CD4-positive, alpha-beta memory T cell (primary cell): ENCODE measurements at regions of chr7 and their contacts with region 1.

Region 1: GRCh38 chr7:105652359-105652993 is 71.2 kb upstream of the EFCAB10 start:
- DNase-seq: peak; percentile 46 to 59 (median 52)
- H3K4me3 ChIP-seq: no peak overlapping the region
- H3K4me3 Mint-ChIP-seq: no peak overlapping the region
- H3K27ac ChIP-seq: no peak overlapping the region
- H3K27ac Mint-ChIP-seq: peak overlapping the region in 2 of 7 donors; percentile 1 to 24
- H3K4me1 ChIP-seq: peaks cover 7% of the 10 kb centered on the region
- H3K4me1 Mint-ChIP-seq: peaks cover 12 to 28% (median 16%) of the 10 kb centered on the region in 4 donors
- H3K27me3 ChIP-seq: no peaks in the 10 kb centered on the region
- H3K27me3 Mint-ChIP-seq: no peaks in the 10 kb centered on the region

Region 2: DNA sequence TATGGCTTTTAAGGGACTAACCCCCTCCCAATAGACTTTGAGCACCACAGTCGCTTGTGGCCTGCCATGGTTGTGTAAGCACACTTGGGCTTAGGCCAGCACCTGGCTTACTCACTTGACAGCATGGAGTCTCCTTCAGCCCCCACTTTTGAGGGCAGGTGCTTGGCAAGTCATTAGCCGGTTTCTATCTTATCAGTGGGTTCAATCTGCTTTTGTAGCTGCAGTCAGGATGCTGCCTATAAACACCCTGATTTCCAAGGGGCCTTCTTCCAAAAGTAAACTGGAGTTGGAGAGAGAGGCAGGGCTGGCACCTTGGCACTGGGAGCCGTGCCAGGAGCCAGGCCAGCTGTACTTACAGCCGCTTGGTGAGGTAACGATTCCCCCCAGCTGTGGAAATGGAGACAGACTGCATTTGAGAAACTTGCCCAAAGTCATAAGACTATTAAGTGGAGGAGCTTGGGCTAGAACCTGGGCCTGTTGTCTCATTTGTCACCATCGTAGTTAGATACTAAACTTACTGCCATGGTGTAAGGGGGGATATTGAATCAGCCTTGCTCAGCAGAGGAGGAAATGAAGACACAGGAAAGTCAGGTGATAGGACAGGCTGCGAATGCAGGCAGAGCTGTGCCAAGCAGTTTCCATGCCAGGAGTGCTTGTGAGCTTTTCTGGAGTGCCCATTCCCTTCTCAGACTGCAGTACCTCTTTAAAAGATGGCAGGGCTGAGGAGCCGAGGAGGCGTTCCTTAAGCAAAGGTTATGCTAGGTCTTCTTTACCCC is 21.1 kb after region 1 on chr7:
- CTCF ChIA-PET with region 1: interaction called, 82 read pairs
- POLR2A ChIA-PET with region 1: interaction called, 5 read pairs
- intact Hi-C with region 1: no loop called
- DNase-seq: peak in 1 of 5 donors; percentile 61
- H3K4me3 ChIP-seq: no peak overlapping the region
- H3K4me3 Mint-ChIP-seq: peak overlapping the region in 6 of 8 donors; percentile 3 to 78 (median 24)
- H3K27ac ChIP-seq: peak overlapping the region; percentile 36
- H3K27ac Mint-ChIP-seq: peak overlapping the region; percentile 58 to 97 (median 85)
- H3K4me1 ChIP-seq: peaks cover 63% of the 10 kb centered on the region
- H3K4me1 Mint-ChIP-seq: peaks cover 49 to 73% (median 62%) of the 10 kb centered on the region in 4 donors
- H3K27me3 ChIP-seq: no peaks in the 10 kb centered on the region
- H3K27me3 Mint-ChIP-seq: no peaks in the 10 kb centered on the region

Region 3: GRCh38 chr7:105691733-105692564 is 39.5 kb after region 1 on chr7:
- CTCF ChIA-PET with region 1: interaction called, 17 read pairs
- POLR2A ChIA-PET with region 1: interaction called, 9 read pairs
- intact Hi-C with region 1: loop called (anchors 1 kb)
- DNase-seq: peak; percentile 84 to 95 (median 91)
- H3K4me3 ChIP-seq: peak overlapping the region; percentile 71 to 75
- H3K4me3 Mint-ChIP-seq: peak overlapping the region; percentile 91 to 98 (median 94)
- H3K27ac ChIP-seq: peak overlapping the region; percentile 89
- H3K27ac Mint-ChIP-seq: peak overlapping the region; percentile 96 to 100 (median 98)
- H3K4me1 ChIP-seq: peaks cover 44% of the 10 kb centered on the region
- H3K4me1 Mint-ChIP-seq: peaks cover 29 to 78% (median 57%) of the 10 kb centered on the region in 4 donors
- H3K27me3 ChIP-seq: no peaks in the 10 kb centered on the region
- H3K27me3 Mint-ChIP-seq: no peaks in the 10 kb centered on the region

Region 4: DNA sequence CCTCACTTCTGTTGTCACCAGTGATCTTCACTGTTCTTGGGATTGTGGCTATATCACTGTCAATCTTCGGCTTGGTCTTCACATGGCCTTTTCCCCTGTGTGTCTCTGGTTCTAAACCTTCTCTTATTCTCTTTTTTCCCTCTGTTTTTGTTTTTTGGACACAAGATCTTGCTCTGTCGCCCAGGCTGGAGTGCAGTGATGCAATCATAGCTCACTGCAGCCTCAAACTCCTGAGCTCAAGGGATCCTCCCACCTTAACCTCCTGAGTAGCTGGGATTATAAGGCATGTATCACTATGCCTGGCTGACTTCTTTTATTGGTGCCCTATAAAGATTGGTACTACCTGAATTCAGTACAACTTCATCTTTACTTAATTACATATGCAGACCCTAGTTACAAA is 72.2 kb after region 1 on chr7:
- CTCF ChIA-PET with region 1: interaction called, 11 read pairs
- POLR2A ChIA-PET with region 1: no interaction called
- intact Hi-C with region 1: no loop called
- DNase-seq: no peak
- H3K4me3 ChIP-seq: no peak overlapping the region
- H3K4me3 Mint-ChIP-seq: no peak overlapping the region
- H3K27ac ChIP-seq: no peak overlapping the region
- H3K27ac Mint-ChIP-seq: peak overlapping the region in 2 of 7 donors; percentile 30 to 37
- H3K4me1 ChIP-seq: no peaks in the 10 kb centered on the region
- H3K4me1 Mint-ChIP-seq: no peaks in the 10 kb centered on the region
- H3K27me3 ChIP-seq: no peaks in the 10 kb centered on the region
- H3K27me3 Mint-ChIP-seq: no peaks in the 10 kb centered on the region

Region 5: GRCh38 chr7:105743351-105744090 is 91.0 kb after region 1 on chr7:
- CTCF ChIA-PET with region 1: interaction called, 14 read pairs
- POLR2A ChIA-PET with region 1: no interaction called
- intact Hi-C with region 1: no loop called
- DNase-seq: no peak
- H3K4me3 ChIP-seq: no peak overlapping the region
- H3K4me3 Mint-ChIP-seq: no peak overlapping the region
- H3K27ac ChIP-seq: no peak overlapping the region
- H3K27ac Mint-ChIP-seq: peak overlapping the region in 2 of 7 donors; percentile 18 to 58
- H3K4me1 ChIP-seq: peaks cover 4% of the 10 kb centered on the region
- H3K4me1 Mint-ChIP-seq: peaks cover 13 to 33% (median 18%) of the 10 kb centered on the region in 4 donors
- H3K27me3 ChIP-seq: no peaks in the 10 kb centered on the region
- H3K27me3 Mint-ChIP-seq: no peaks in the 10 kb centered on the region

Region 6: GRCh38 chr7:106009403-106010226 is 357.1 kb after region 1 on chr7:
- CTCF ChIA-PET with region 1: interaction called, 12 read pairs
- POLR2A ChIA-PET with region 1: no interaction called
- intact Hi-C with region 1: loop called (anchors 1 kb)
- DNase-seq: peak; percentile 77 to 83 (median 78)
- H3K4me3 ChIP-seq: no peak overlapping the region
- H3K4me3 Mint-ChIP-seq: peak overlapping the region in 4 of 8 donors; percentile 34 to 64 (median 48)
- H3K27ac ChIP-seq: no peak overlapping the region
- H3K27ac Mint-ChIP-seq: peak overlapping the region in 6 of 7 donors; percentile 64 to 85 (median 74)
- H3K4me1 ChIP-seq: peaks cover 23% of the 10 kb centered on the region
- H3K4me1 Mint-ChIP-seq: peaks cover 18 to 28% (median 24%) of the 10 kb centered on the region in 4 donors
- H3K27me3 ChIP-seq: no peaks in the 10 kb centered on the region
- H3K27me3 Mint-ChIP-seq: no peaks in the 10 kb centered on the region

Region 7: GRCh38 chr7:106041140-106041717 is 388.8 kb after region 1 on chr7:
- CTCF ChIA-PET with region 1: interaction called, 67 read pairs
- POLR2A ChIA-PET with region 1: interaction called, 3 read pairs
- intact Hi-C with region 1: loop called (anchors 1 kb)
- DNase-seq: peak in 2 of 5 donors; percentile 19 to 30
- H3K4me3 ChIP-seq: no peak overlapping the region
- H3K4me3 Mint-ChIP-seq: peak overlapping the region in 2 of 8 donors; percentile 6 to 59
- H3K27ac ChIP-seq: no peak overlapping the region
- H3K27ac Mint-ChIP-seq: peak overlapping the region in 4 of 7 donors; percentile 0 to 74 (median 30)
- H3K4me1 ChIP-seq: peaks cover 26% of the 10 kb centered on the region
- H3K4me1 Mint-ChIP-seq: peaks cover 15 to 32% (median 25%) of the 10 kb centered on the region in 4 donors
- H3K27me3 ChIP-seq: no peaks in the 10 kb centered on the region
- H3K27me3 Mint-ChIP-seq: peaks cover 2 to 6% of the 10 kb centered on the region in 2 donors